B cell (primary cell): ENCODE measurements at regions of chr3 and their contacts with region 1.

Region 1: DNA sequence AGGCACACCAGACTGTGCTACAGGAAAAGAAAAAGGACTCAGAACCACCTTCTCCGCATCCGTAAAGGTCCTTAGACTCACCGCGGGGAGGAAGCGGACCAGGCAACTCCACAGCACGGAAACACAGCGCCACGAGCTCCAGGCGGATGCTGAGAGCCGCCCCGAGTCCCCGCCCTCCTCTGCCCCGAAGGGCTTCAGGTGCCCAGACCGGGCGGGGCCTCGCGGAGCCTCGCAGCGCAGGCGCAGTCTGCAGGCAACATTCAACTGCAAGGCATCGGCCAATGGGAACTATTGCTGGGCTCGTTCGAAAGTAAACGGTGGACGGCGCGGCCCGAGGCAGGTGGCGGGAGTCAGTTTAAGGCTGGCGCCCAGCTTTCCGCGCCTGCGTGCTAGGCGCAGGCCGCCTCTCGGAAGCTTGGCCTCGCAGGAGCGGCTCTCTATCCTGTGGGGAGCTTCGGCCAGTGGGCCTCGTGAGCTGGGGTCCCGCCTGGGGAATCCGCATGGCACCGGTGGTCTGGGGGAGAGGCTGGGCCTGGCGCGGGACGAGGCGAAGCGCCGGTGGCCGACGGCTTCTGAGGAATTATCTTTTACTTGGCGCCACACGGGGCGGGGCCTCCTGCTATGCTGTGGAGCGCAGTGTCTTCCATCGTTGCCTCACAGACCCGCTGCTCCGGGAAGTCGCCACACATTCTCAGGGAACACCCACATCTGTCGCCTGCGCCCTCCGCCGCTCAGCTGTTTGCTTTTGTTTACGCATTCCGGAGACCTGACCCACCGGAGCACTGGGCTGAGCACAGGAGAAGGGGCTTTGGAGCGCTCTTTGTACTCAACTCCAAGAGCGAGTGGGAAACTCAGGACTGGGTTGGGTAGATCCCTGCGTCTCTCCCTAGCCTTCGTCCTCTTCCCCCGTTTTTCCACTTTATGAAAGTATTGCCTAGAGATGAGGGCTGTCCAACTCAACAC is at the start of gene TRIM59:
- DNase-seq: peak; percentile 97
- ATAC-seq: peak; percentile 97
- H3K4me3 ChIP-seq: peak within 1 kb of the TSS; percentile 84 to 99 (median 95)
- H3K4me3 Mint-ChIP-seq: peak within 1 kb of the TSS; percentile 95
- H3K27ac ChIP-seq: peak within 1 kb of the TSS; percentile 70 to 84
- H3K27ac Mint-ChIP-seq: peak within 1 kb of the TSS; percentile 91
- H3K4me1 ChIP-seq: peaks cover 16 to 18% of the 10 kb centered on the region in 2 donors
- H3K4me1 Mint-ChIP-seq: peaks cover 30% of the 10 kb centered on the region
- H3K27me3 ChIP-seq: peaks cover 0 to 3% (median 0%) of the 10 kb centered on the region in 4 experiments
- H3K27me3 Mint-ChIP-seq: no peaks in the 10 kb centered on the region
- CTCF ChIP-seq: no peak
- total RNA-seq, gene TRIM59: 17.4 and 22.0 TPM in 2 replicates

Region 2: GRCh38 chr3:159787191-159787590 is 662.7 kb before region 1 on chr3:
- CTCF ChIA-PET with region 1: no interaction called
- POLR2A ChIA-PET with region 1: no interaction called
- intact Hi-C with region 1: no loop called
- DNase-seq: no peak
- ATAC-seq: no peak
- H3K4me3 ChIP-seq: no peak overlapping the region
- H3K4me3 Mint-ChIP-seq: no peak overlapping the region
- H3K27ac ChIP-seq: no peak overlapping the region
- H3K27ac Mint-ChIP-seq: no peak overlapping the region
- H3K4me1 ChIP-seq: no peaks in the 10 kb centered on the region
- H3K4me1 Mint-ChIP-seq: no peaks in the 10 kb centered on the region
- H3K27me3 ChIP-seq: no peaks in the 10 kb centered on the region
- H3K27me3 Mint-ChIP-seq: peaks cover 9% of the 10 kb centered on the region
- CTCF ChIP-seq: no peak

Region 3: GRCh38 chr3:160150525-160150924 is 299.4 kb before region 1 on chr3:
- CTCF ChIA-PET with region 1: no interaction called
- POLR2A ChIA-PET with region 1: no interaction called
- intact Hi-C with region 1: no loop called
- DNase-seq: no peak
- ATAC-seq: no peak
- H3K4me3 ChIP-seq: no peak overlapping the region
- H3K4me3 Mint-ChIP-seq: no peak overlapping the region
- H3K27ac ChIP-seq: no peak overlapping the region
- H3K27ac Mint-ChIP-seq: no peak overlapping the region
- H3K4me1 ChIP-seq: no peaks in the 10 kb centered on the region
- H3K4me1 Mint-ChIP-seq: no peaks in the 10 kb centered on the region
- H3K27me3 ChIP-seq: no peaks in the 10 kb centered on the region
- H3K27me3 Mint-ChIP-seq: peaks cover under 1% of the 10 kb centered on the region
- CTCF ChIP-seq: no peak

Region 4: GRCh38 chr3:160399125-160400029 is 50.5 kb before region 1 on chr3 and contains the starts of genes IFT80 and SMC4:
- CTCF ChIA-PET with region 1: no interaction called
- POLR2A ChIA-PET with region 1: interaction called, 4 read pairs
- intact Hi-C with region 1: loop called (anchors 1 kb)
- DNase-seq: peak; percentile 97
- ATAC-seq: peak; percentile 96
- H3K4me3 ChIP-seq: peak within 1 kb of the TSS; percentile 71 to 97 (median 85)
- H3K4me3 Mint-ChIP-seq: peak within 1 kb of the TSS; percentile 98
- H3K27ac ChIP-seq: peak within 1 kb of the TSS; percentile 69 to 97
- H3K27ac Mint-ChIP-seq: peak within 1 kb of the TSS; percentile 98
- H3K4me1 ChIP-seq: peaks cover 26 to 45% of the 10 kb centered on the region in 2 donors
- H3K4me1 Mint-ChIP-seq: peaks cover 43% of the 10 kb centered on the region
- H3K27me3 ChIP-seq: peaks cover 0 to 25% (median 7%) of the 10 kb centered on the region in 4 experiments
- H3K27me3 Mint-ChIP-seq: no peaks in the 10 kb centered on the region
- CTCF ChIP-seq: no peak
- total RNA-seq, gene IFT80: 44.1 and 47.0 TPM in 2 replicates
- total RNA-seq, gene SMC4: 53.8 and 55.1 TPM in 2 replicates

Region 5: DNA sequence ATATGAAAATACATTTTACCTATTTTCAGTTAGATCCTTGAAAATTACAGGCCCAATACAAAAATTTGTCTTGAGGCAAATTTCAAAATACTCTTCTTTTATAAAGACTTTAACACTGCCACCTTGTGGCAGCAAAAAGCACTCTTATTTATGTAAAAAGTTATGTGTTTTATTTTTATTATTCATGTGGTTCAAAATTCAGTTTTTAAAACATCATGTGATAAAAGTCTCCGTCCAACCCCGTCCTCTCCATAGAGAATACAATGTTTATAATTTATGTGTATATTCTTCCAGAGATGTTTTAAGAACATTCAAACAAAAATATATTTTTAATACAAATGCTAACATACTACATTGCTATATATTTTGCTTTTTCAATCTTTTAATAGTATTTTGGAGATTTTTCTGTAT is 36.5 kb after region 1 on chr3:
- CTCF ChIA-PET with region 1: no interaction called
- POLR2A ChIA-PET with region 1: no interaction called
- intact Hi-C with region 1: loop called (anchors 5 kb)
- DNase-seq: peak; percentile 48
- ATAC-seq: no peak
- H3K4me3 ChIP-seq: no peak overlapping the region
- H3K4me3 Mint-ChIP-seq: no peak overlapping the region
- H3K27ac ChIP-seq: no peak overlapping the region
- H3K27ac Mint-ChIP-seq: no peak overlapping the region
- H3K4me1 ChIP-seq: peaks cover 3 to 7% of the 10 kb centered on the region in 2 donors
- H3K4me1 Mint-ChIP-seq: peaks cover 8% of the 10 kb centered on the region
- H3K27me3 ChIP-seq: no peaks in the 10 kb centered on the region
- H3K27me3 Mint-ChIP-seq: no peaks in the 10 kb centered on the region
- CTCF ChIP-seq: peak; percentile 83

Region 6: DNA sequence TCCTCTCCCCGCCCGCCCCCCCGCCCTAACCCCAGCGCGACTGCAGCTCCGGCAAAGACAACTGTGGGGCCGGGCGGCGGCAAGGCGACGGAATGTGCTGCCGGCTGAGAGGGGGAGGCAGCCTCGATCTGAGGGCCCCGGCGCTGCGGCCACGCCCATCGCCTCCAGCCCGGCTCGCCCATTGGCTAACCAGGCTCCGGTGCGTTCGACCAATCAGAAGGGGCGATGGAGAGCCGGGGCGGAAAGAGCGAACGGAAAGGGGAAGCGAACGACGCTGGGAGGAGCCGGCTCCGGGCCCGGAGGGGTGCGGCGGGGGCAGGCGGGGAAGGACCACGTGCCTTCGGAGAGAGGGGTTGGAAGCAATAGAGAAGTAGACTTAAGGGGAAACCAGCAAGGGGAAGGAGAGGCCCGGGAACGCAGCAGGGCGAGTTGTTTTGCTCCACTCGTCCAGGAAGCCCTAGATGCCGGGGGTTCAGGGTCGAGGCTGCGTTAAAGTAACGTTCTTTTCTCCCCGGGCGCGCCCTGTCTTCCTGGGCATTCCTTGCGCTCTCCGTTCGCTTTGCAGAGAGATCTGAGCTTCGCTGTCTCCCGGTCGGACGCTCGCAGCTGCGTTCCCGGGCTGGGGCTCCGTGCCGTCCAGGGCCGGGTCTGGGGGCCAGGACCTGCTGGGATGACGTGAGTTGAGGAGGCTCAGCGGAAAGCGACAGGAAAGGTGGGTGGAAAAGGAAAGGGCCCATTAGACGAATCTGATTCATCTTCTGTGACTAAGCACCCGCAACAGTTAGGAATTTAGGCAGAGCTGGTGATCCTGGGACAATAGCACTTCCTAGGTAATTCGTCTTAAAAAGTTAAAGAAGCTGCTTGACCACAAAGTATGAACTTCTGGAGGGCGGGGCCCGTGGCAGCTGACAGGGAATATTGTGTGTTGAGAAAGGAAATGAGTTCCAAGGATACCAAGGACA is 115.8 kb after region 1 on chr3 and contains the start of gene KPNA4:
- CTCF ChIA-PET with region 1: no interaction called
- POLR2A ChIA-PET with region 1: interaction called, 3 read pairs
- intact Hi-C with region 1: loop called (anchors 1 kb)
- DNase-seq: peak; percentile 99
- ATAC-seq: peak; percentile 86
- H3K4me3 ChIP-seq: peak within 1 kb of the TSS; percentile 58 to 92 (median 89)
- H3K4me3 Mint-ChIP-seq: peak within 1 kb of the TSS; percentile 97
- H3K27ac ChIP-seq: peak within 1 kb of the TSS; percentile 85 to 94
- H3K27ac Mint-ChIP-seq: peak within 1 kb of the TSS; percentile 99
- H3K4me1 ChIP-seq: peaks cover 23 to 45% of the 10 kb centered on the region in 2 donors
- H3K4me1 Mint-ChIP-seq: peaks cover 52% of the 10 kb centered on the region
- H3K27me3 ChIP-seq: no peaks in the 10 kb centered on the region
- H3K27me3 Mint-ChIP-seq: no peaks in the 10 kb centered on the region
- CTCF ChIP-seq: no peak
- total RNA-seq, gene KPNA4: 53.8 and 55.1 TPM in 2 replicates

Region 7: DNA sequence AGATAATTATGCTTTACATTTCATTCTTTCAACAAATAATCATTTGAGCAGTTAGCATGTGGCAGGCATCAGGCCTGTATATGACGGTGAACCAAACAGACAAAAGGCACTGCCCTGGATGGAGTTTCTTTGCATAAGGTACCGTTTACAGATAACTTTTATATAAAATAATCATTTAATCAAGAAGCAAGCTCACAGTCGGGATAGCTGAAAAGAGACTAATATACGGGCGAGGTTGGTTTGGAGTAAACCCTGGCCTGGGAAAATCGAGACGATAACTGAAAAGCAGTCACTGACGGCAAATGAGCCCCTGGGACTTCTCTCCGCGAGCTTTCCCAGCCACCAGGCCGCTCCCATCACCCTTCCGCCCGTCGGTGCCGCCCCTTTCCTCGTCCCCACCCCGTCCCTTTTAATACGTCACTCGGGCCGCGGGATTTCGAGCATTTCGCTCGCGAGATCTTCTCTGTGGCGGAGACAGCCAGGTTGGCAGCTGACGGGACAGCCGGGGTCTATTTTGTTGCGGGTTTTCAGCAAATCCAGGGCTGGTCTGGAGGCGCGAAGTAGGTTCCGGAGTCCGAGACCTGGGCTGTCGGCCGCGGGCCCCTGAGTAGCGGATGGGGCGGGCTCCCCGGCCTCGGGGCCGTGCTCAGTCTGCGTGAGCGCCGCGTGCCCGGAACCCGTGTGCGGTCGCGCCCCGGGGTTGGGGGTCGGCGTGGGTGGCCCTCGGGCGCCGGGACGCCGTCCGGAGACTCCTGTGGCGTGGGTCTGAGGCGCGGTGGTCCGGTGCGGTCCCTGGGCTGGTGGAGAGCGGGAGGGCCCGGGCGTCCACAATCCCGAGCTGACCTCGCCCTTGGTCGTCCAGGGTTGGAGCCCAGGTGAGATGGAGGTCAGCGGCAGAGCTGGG is 771.2 kb after region 1 on chr3 and contains the start of gene NMD3:
- CTCF ChIA-PET with region 1: no interaction called
- POLR2A ChIA-PET with region 1: no interaction called
- intact Hi-C with region 1: loop called (anchors 10 kb)
- DNase-seq: peak; percentile 93
- ATAC-seq: peak; percentile 95
- H3K4me3 ChIP-seq: peak within 1 kb of the TSS; percentile 70 to 95 (median 92)
- H3K4me3 Mint-ChIP-seq: peak within 1 kb of the TSS; percentile 94
- H3K27ac ChIP-seq: peak within 1 kb of the TSS; percentile 64 to 81
- H3K27ac Mint-ChIP-seq: peak within 1 kb of the TSS; percentile 94
- H3K4me1 ChIP-seq: peaks cover 22% of the 10 kb centered on the region in 2 donors
- H3K4me1 Mint-ChIP-seq: peaks cover 27% of the 10 kb centered on the region
- H3K27me3 ChIP-seq: peaks cover 0 to 5% (median 2%) of the 10 kb centered on the region in 4 experiments
- H3K27me3 Mint-ChIP-seq: peaks cover 10% of the 10 kb centered on the region
- CTCF ChIP-seq: no peak
- total RNA-seq, gene NMD3: 36.1 and 38.0 TPM in 2 replicates